CD8-positive, alpha-beta T cell (primary cell): ENCODE measurements at regions of chr12 and their contacts with region 1.

Region 1: GRCh38 chr12:41819948-41820347 is 324.7 kb downstream of the GXYLT1 start:
- DNase-seq: no peak
- ATAC-seq: no peak
- H3K4me3 ChIP-seq: no peak overlapping the region
- H3K4me3 Mint-ChIP-seq: no peak overlapping the region
- H3K27ac ChIP-seq: no peak overlapping the region
- H3K27ac Mint-ChIP-seq: no peak overlapping the region
- H3K4me1 ChIP-seq: no peaks in the 10 kb centered on the region
- H3K4me1 Mint-ChIP-seq: no peaks in the 10 kb centered on the region
- H3K27me3 ChIP-seq: no peaks in the 10 kb centered on the region
- H3K27me3 Mint-ChIP-seq: peaks cover 3% of the 10 kb centered on the region
- CTCF ChIP-seq: no peak

Region 2: DNA sequence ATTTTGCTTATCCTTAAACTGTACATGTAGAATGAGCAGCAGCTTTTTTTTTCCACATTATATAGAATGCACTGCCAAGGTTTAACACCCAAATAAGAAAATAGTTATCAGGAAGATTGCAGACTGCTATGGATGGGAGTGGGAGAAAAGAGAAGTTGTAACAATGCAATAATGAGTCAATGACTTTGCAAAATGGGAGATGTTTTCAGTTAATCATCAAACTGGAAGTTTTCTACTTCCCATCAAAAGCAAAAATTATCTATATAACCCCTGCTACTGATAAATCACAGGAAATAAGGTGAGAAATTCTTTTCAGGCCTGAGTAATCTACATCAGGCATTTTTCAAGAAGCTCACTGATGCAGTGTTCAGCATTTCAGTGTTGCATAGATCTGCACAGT is 15.6 kb after region 1 on chr12:
- CTCF ChIA-PET with region 1: no interaction called
- POLR2A ChIA-PET with region 1: no interaction called
- intact Hi-C with region 1: no loop called
- DNase-seq: no peak
- ATAC-seq: no peak
- H3K4me3 ChIP-seq: no peak overlapping the region
- H3K4me3 Mint-ChIP-seq: no peak overlapping the region
- H3K27ac ChIP-seq: no peak overlapping the region
- H3K27ac Mint-ChIP-seq: no peak overlapping the region
- H3K4me1 ChIP-seq: no peaks in the 10 kb centered on the region
- H3K4me1 Mint-ChIP-seq: no peaks in the 10 kb centered on the region
- H3K27me3 ChIP-seq: no peaks in the 10 kb centered on the region
- H3K27me3 Mint-ChIP-seq: peaks cover 11% of the 10 kb centered on the region
- CTCF ChIP-seq: no peak

Region 3: GRCh38 chr12:42027546-42027945 is 207.6 kb after region 1 on chr12:
- CTCF ChIA-PET with region 1: no interaction called
- POLR2A ChIA-PET with region 1: no interaction called
- intact Hi-C with region 1: no loop called
- DNase-seq: no peak
- ATAC-seq: no peak
- H3K4me3 ChIP-seq: no peak overlapping the region
- H3K4me3 Mint-ChIP-seq: no peak overlapping the region
- H3K27ac ChIP-seq: no peak overlapping the region
- H3K27ac Mint-ChIP-seq: no peak overlapping the region
- H3K4me1 ChIP-seq: peaks cover 4% of the 10 kb centered on the region
- H3K4me1 Mint-ChIP-seq: peaks cover 9% of the 10 kb centered on the region
- H3K27me3 ChIP-seq: no peaks in the 10 kb centered on the region
- H3K27me3 Mint-ChIP-seq: peaks cover 20% of the 10 kb centered on the region
- CTCF ChIP-seq: no peak

Region 4: GRCh38 chr12:42315108-42315507 is 495.2 kb after region 1 on chr12:
- CTCF ChIA-PET with region 1: no interaction called
- POLR2A ChIA-PET with region 1: no interaction called
- intact Hi-C with region 1: loop called in 1 of 2 experiments (anchors 5 kb)
- DNase-seq: no peak
- ATAC-seq: no peak
- H3K4me3 ChIP-seq: no peak overlapping the region
- H3K4me3 Mint-ChIP-seq: no peak overlapping the region
- H3K27ac ChIP-seq: no peak overlapping the region
- H3K27ac Mint-ChIP-seq: no peak overlapping the region
- H3K4me1 ChIP-seq: no peaks in the 10 kb centered on the region
- H3K4me1 Mint-ChIP-seq: no peaks in the 10 kb centered on the region
- H3K27me3 ChIP-seq: no peaks in the 10 kb centered on the region
- H3K27me3 Mint-ChIP-seq: no peaks in the 10 kb centered on the region
- CTCF ChIP-seq: no peak

Region 5: GRCh38 chr12:43151441-43151981 is 1331.6 kb after region 1 on chr12:
- CTCF ChIA-PET with region 1: no interaction called
- POLR2A ChIA-PET with region 1: no interaction called
- intact Hi-C with region 1: no loop called
- DNase-seq: no peak
- ATAC-seq: no peak
- H3K4me3 ChIP-seq: no peak overlapping the region
- H3K4me3 Mint-ChIP-seq: no peak overlapping the region
- H3K27ac ChIP-seq: no peak overlapping the region
- H3K27ac Mint-ChIP-seq: no peak overlapping the region
- H3K4me1 ChIP-seq: no peaks in the 10 kb centered on the region
- H3K4me1 Mint-ChIP-seq: no peaks in the 10 kb centered on the region
- H3K27me3 ChIP-seq: no peaks in the 10 kb centered on the region
- H3K27me3 Mint-ChIP-seq: no peaks in the 10 kb centered on the region
- CTCF ChIP-seq: no peak